Right lobe of liver (tissue), 6 donors: ENCODE measurements at regions of chr9 and their contacts with region 1.

Region 1: DNA sequence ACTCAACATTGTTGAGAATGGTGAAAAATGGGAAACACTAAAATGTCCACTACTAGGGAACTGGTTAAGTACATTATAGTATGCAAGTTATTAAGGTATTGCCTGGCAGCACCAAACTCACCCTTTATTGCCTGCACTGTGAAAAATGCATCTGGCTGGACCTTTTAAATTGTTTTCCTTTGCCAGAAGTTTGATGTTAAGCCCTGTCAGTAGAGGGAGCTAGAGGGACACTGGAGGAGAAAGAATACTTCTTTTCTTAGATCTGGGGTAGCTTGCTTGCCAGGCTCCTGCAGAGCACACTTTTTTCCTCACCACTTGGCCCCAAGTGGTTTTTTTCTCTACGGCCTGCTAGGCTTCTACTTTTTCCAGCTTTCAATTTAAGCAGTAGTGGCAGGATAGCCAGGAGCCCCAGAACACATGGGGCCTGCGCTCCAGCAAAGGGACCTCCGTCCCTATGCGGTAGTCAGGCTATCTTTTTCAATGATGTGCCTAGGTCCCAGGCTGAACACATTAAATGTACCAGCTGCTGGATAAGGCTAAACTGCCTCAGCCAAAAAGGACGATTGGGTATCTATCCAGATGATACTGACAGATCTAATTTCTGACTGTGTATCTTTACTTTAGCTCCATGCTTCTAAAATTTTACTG is 8.0 kb upstream of the HABP4 start:
- DNase-seq: no peak
- ATAC-seq: peak; percentile 82 to 90 (median 86)
- H3K4me3 ChIP-seq: no peak overlapping the region
- H3K27ac ChIP-seq: no peak overlapping the region
- H3K4me1 ChIP-seq: no peaks in the 10 kb centered on the region
- H3K27me3 ChIP-seq: no peaks in the 10 kb centered on the region
- CTCF ChIP-seq: peak; percentile 58 to 75 (median 70)
- POLR2A ChIP-seq: no peak

Region 2: GRCh38 chr9:95268681-95269080 is 1173.2 kb before region 1 on chr9:
- intact Hi-C with region 1: no loop called
- DNase-seq: peak in 1 of 3 donors; percentile 28
- ATAC-seq: peak; percentile 37 to 57 (median 46)
- H3K4me3 ChIP-seq: no peak overlapping the region
- H3K27ac ChIP-seq: no peak overlapping the region
- H3K4me1 ChIP-seq: peaks cover 0 to 34% (median 5%) of the 10 kb centered on the region in 4 donors
- H3K27me3 ChIP-seq: no peaks in the 10 kb centered on the region
- CTCF ChIP-seq: peak; percentile 15 to 44 (median 26)
- POLR2A ChIP-seq: no peak

Region 3: GRCh38 chr9:96667361-96667728 is 225.4 kb after region 1 on chr9:
- intact Hi-C with region 1: loop called (anchors 5 to 10 kb)
- DNase-seq: no peak
- ATAC-seq: no peak
- H3K4me3 ChIP-seq: no peak overlapping the region
- H3K27ac ChIP-seq: no peak overlapping the region
- H3K4me1 ChIP-seq: no peaks in the 10 kb centered on the region
- H3K27me3 ChIP-seq: no peaks in the 10 kb centered on the region
- CTCF ChIP-seq: no peak
- POLR2A ChIP-seq: no peak